Activated CD8-positive, alpha-beta T cell treated with anti-CD3 and anti-CD28 coated beads, Interleukin-2, amount 10 ng/mL, durations not matched to agents 7 days and 5 days (primary cell): ENCODE measurements at regions of chr6 and their contacts with region 1.

Region 1: DNA sequence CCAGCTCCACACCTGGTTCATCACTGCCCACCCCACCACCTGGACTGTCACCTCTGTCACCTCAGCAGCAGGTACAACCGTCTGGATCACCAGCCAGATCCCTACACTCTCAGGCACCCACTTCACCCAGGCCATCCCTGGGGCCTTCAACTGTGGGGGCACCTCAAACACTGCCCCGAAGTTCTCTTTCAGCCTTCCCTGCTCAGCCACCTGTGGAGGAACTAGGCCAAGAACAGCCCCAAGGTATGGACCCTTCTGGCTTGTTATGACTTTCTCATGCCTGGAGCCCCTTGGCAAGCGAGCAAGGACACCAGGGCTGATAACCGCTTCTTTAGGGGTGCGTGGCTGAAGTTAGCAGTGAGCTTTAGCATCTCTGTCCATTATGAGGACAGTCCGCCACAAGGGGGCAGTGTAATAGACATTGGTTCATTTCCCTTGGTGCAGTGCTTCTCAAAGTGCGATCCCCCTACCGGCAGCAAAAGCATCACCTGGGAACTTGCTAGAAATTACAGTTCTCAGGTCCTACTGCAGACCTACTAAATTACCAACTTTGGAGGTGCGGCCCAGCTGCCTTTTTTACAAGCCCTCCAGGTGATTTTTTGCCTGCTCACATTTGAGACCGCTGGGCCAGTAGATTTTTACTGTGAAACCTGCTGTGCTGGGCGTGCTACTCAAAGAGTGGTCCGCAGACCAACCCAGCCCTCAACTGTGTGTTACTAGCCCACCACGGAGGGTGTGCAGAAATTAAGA is 32.5 kb downstream of the PNPLA1 start:
- DNase-seq: peak; percentile 97
- ATAC-seq: peak; percentile 99
- H3K4me3 Mint-ChIP-seq: no peak overlapping the region
- H3K27ac Mint-ChIP-seq: no peak overlapping the region
- H3K4me1 Mint-ChIP-seq: peaks cover 6% of the 10 kb centered on the region
- H3K27me3 Mint-ChIP-seq: peaks cover 11% of the 10 kb centered on the region

Region 2: GRCh38 chr6:36131511-36132245 is 170.7 kb before region 1 on chr6:
- CTCF ChIA-PET with region 1: interaction called, 13 read pairs
- POLR2A ChIA-PET with region 1: no interaction called
- DNase-seq: peak; percentile 69
- ATAC-seq: peak; percentile 73
- H3K4me3 Mint-ChIP-seq: peak overlapping the region; percentile 86
- H3K27ac Mint-ChIP-seq: peak overlapping the region; percentile 93
- H3K4me1 Mint-ChIP-seq: peaks cover 62% of the 10 kb centered on the region
- H3K27me3 Mint-ChIP-seq: no peaks in the 10 kb centered on the region

Region 3: GRCh38 chr6:36244641-36245280 is 57.6 kb before region 1 on chr6:
- CTCF ChIA-PET with region 1: interaction called, 11 read pairs
- POLR2A ChIA-PET with region 1: interaction called, 4 read pairs
- DNase-seq: no peak
- ATAC-seq: no peak
- H3K4me3 Mint-ChIP-seq: no peak overlapping the region
- H3K27ac Mint-ChIP-seq: no peak overlapping the region
- H3K4me1 Mint-ChIP-seq: peaks cover 20% of the 10 kb centered on the region
- H3K27me3 Mint-ChIP-seq: peaks cover 14% of the 10 kb centered on the region

Region 4: GRCh38 chr6:36283608-36284007 is 18.8 kb before region 1 on chr6:
- CTCF ChIA-PET with region 1: interaction called, 38 read pairs
- POLR2A ChIA-PET with region 1: interaction called, 3 read pairs
- DNase-seq: no peak
- ATAC-seq: no peak
- H3K4me3 Mint-ChIP-seq: no peak overlapping the region
- H3K27ac Mint-ChIP-seq: no peak overlapping the region
- H3K4me1 Mint-ChIP-seq: peaks cover 11% of the 10 kb centered on the region
- H3K27me3 Mint-ChIP-seq: peaks cover 46% of the 10 kb centered on the region

Region 5: GRCh38 chr6:36319436-36319762 is 17.0 kb after region 1 on chr6:
- CTCF ChIA-PET with region 1: interaction called, 12 read pairs
- POLR2A ChIA-PET with region 1: no interaction called
- DNase-seq: no peak
- ATAC-seq: no peak
- H3K4me3 Mint-ChIP-seq: no peak overlapping the region
- H3K27ac Mint-ChIP-seq: no peak overlapping the region
- H3K4me1 Mint-ChIP-seq: no peaks in the 10 kb centered on the region
- H3K27me3 Mint-ChIP-seq: peaks cover 22% of the 10 kb centered on the region

Region 6: DNA sequence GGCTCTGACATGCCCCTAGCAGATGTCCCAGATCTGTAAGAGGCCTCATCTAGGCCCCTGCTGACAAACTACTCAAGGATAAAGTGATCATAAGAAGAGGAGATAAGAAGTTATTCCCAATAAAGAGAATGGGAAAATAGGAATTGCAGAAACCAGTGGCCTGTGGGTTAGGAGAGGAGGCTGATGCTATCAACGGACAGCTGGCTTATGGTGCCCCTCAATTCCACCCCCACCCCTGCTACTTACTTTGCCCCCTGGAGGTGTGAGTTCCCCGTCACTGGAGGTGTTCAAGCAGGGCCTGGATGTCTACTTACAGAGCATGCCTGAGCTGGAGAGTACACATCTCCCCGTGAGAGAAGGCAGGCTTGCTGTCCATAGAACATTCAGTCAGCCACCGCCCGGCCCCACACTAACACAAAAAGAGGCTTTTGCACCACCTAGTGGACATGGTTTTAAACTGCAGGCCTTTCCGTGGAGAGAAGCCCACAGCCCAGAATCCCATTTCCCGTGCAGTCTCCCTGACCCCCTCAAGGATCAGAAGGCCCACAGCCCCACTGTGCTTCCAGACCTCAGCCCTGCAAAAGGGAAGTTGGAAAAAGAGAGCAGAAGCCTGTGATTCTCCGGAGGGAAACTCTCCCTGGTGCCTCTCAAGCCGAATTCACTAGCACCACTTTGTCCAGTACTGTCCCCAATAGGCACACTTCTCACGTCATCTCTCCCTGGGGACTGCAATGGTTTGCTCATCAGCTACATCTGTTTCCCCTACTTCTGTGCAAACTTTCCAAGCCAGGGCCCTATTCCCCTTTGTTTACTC is 58.0 kb after region 1 on chr6:
- CTCF ChIA-PET with region 1: interaction called, 59 read pairs
- POLR2A ChIA-PET with region 1: interaction called, 3 read pairs
- DNase-seq: peak; percentile 83
- ATAC-seq: peak; percentile 89
- H3K4me3 Mint-ChIP-seq: no peak overlapping the region
- H3K27ac Mint-ChIP-seq: no peak overlapping the region
- H3K4me1 Mint-ChIP-seq: peaks cover 18% of the 10 kb centered on the region
- H3K27me3 Mint-ChIP-seq: peaks cover 8% of the 10 kb centered on the region